Mammary epithelial cell (primary cell): ENCODE measurements at regions of chr3 and their contacts with region 1.

Region 1: GRCh38 chr3:196942226-196942914 is at the start of gene NCBP2:
- DNase-seq: peak; percentile 98
- H3K4me3 ChIP-seq: peak within 1 kb of the TSS; percentile 78 to 96 (median 86)
- H3K27ac ChIP-seq: peak within 1 kb of the TSS; percentile 79
- H3K4me1 ChIP-seq: peaks cover 12% of the 10 kb centered on the region
- H3K27me3 ChIP-seq: no peaks in the 10 kb centered on the region
- CTCF ChIP-seq: peak; percentile 70 to 78
- total RNA-seq, gene NCBP2: 47.5 to 77.0 TPM

Region 2: GRCh38 chr3:196568246-196569002 is 373.9 kb before region 1 on chr3 and contains the starts of genes FBXO45 and WDR53:
- CTCF ChIA-PET with region 1: no interaction called
- dilution Hi-C with region 1: no loop called
- in situ Hi-C with region 1: no loop called
- intact Hi-C with region 1: loop called (anchors 10 kb)
- DNase-seq: peak; percentile 97
- H3K4me3 ChIP-seq: peak within 1 kb of the TSS; percentile 78 to 94 (median 94)
- H3K27ac ChIP-seq: peak within 1 kb of the TSS; percentile 80
- H3K4me1 ChIP-seq: peaks cover 24% of the 10 kb centered on the region
- H3K27me3 ChIP-seq: no peaks in the 10 kb centered on the region
- CTCF ChIP-seq: no peak
- total RNA-seq, gene FBXO45: 9.2 to 13.5 TPM
- total RNA-seq, gene WDR53: 5.3 to 19.5 TPM

Region 3: DNA sequence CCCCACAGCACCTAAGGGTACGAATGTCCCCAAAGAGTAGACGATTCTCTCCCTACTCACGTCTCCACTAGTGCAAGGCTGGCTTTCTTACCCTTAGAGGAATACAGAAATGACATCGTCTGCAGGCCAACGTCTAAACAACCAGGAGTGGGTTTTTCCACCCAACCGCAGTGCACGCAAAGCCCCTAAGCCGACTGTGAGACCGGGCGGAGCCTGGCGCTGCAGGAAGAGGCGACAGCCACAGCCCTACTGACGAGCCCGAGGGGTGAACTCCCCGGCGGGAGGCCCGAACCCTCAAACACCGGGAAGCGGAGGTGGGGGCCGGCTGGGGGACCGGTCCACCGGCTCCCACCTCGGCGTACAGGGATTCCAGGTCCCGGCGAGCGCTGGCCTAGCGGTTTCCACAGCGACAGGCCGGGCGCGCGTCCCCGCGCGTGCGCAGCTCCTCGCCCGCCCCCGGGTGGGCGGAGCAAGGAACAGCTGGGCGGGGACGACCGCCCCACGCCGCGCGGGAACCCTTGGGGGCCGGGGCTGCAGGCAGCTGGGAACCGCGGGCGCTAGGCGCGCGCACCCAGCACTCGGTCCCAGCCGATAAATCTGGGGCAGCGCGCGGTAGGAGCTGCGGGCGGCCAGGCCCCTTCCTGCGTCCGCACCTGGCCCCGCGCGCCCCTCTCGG is 230.4 kb before region 1 on chr3 and contains the starts of genes CEP19 and PIGX:
- CTCF ChIA-PET with region 1: no interaction called
- dilution Hi-C with region 1: no loop called
- in situ Hi-C with region 1: no loop called
- intact Hi-C with region 1: loop called (anchors 2 kb)
- DNase-seq: peak; percentile 82
- H3K4me3 ChIP-seq: peak within 1 kb of the TSS; percentile 67 to 94 (median 74)
- H3K27ac ChIP-seq: peak within 1 kb of the TSS; percentile 58
- H3K4me1 ChIP-seq: peaks cover 4% of the 10 kb centered on the region
- H3K27me3 ChIP-seq: no peaks in the 10 kb centered on the region
- CTCF ChIP-seq: no peak
- total RNA-seq, gene CEP19: 1.7 to 2.0 TPM
- total RNA-seq, gene PIGX: 25.7 to 28.3 TPM

Region 4: GRCh38 chr3:196837819-196838420 is 104.5 kb before region 1 on chr3:
- CTCF ChIA-PET with region 1: no interaction called
- dilution Hi-C with region 1: no loop called
- in situ Hi-C with region 1: no loop called
- intact Hi-C with region 1: loop called (anchors 1 kb)
- DNase-seq: peak; percentile 36
- H3K4me3 ChIP-seq: no peak overlapping the region
- H3K27ac ChIP-seq: no peak overlapping the region
- H3K4me1 ChIP-seq: no peaks in the 10 kb centered on the region
- H3K27me3 ChIP-seq: no peaks in the 10 kb centered on the region
- CTCF ChIP-seq: peak; percentile 85 to 89

Region 5: DNA sequence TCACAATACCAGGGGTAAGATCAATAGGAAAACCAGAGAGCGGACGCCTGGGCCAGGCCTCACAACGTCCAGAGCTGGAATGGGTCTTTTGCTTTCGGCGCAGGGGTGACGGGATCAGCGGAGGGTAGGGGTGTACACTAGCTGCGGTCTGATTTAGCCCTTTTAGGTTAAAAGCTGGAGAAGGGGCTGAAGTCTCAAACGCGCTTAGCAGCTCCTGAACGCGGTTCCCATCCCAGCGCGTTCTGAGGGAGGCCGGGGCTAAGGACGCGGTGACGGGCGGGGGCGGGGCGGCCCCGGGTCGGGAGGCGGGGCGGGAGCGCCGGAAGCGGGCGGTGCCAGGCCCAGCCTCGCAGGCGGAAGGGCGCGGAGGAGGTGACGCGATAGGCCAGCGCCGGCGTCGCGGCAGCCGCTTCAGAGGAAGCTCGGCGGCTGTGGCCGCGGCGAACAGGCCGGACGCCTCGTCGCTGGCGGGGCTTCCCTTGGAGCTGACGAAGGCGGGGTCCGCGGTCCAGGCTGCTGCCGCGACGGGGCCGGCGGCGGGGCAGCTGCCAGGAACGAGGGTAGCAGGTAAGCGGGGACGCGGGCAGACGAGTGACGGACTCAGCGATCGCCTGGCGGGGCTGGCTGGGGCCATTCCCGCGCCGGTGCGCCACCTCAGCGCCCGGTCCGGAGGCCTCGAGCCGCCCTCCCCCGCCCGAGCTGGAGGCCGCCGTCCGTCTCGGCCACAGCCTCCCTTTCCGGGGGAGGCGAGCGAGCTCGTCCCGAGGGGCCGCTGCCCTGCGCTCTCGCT is 74.7 kb before region 1 on chr3 and contains the start of gene SENP5:
- CTCF ChIA-PET with region 1: interaction called, 33 read pairs
- dilution Hi-C with region 1: no loop called
- in situ Hi-C with region 1: no loop called
- intact Hi-C with region 1: no loop called
- DNase-seq: peak; percentile 89
- H3K4me3 ChIP-seq: peak within 1 kb of the TSS; percentile 87 to 99 (median 99)
- H3K27ac ChIP-seq: peak within 1 kb of the TSS; percentile 82
- H3K4me1 ChIP-seq: no peaks in the 10 kb centered on the region
- H3K27me3 ChIP-seq: no peaks in the 10 kb centered on the region
- CTCF ChIP-seq: no peak
- total RNA-seq, gene SENP5: 30.5 to 39.7 TPM